Natural killer cell (primary cell): ENCODE measurements at regions of chr1 and their contacts with region 1.

Region 1: DNA sequence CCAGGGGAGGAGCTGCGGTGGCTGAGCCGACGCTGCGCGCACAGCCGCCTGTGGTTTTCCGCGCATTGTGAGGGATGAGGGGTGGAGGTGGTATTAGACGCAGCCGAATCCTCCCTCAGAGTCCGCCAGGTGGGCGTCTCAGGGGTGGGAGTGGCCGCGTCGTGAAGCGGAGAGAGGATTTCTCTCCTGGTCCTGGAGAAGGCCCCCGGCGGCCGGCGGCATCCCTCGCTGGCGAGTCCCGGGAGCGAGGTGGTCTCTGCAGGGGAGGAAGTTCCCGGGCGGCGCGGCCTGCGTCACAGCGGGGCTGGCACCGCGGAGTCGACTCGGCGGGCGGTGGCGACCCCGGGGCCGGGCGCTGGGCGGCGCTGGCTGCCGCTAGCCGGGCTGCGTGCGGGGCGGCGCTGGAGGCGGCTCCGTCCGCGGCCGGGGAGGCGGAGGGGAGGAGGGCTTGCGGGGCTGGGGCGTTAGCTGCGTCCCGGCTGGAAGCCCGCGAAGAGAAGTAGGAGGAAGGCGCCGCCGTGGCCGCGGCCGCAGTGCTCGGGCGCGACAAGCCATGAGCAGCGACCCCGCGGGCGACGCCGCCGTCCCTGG is at the start of gene LRRC8C:
- DNase-seq: peak; percentile 89 to 92
- ATAC-seq: peak; percentile 87 to 93 (median 88)
- H3K4me3 ChIP-seq: peak within 1 kb of the TSS; percentile 91
- H3K4me3 Mint-ChIP-seq: peak within 1 kb of the TSS; percentile 95
- H3K27ac ChIP-seq: peak within 1 kb of the TSS; percentile 88
- H3K27ac Mint-ChIP-seq: peak within 1 kb of the TSS; percentile 92 to 99
- H3K4me1 ChIP-seq: peaks cover 19% of the 10 kb centered on the region
- H3K4me1 Mint-ChIP-seq: peaks cover 45 to 56% of the 10 kb centered on the region in 2 donors
- H3K27me3 ChIP-seq: no peaks in the 10 kb centered on the region
- H3K27me3 Mint-ChIP-seq: no peaks in the 10 kb centered on the region
- CTCF ChIP-seq: peak; percentile 48
- total RNA-seq, gene LRRC8C: 7.6 to 19.1 (median 15.1) TPM

Region 2: GRCh38 chr1:89608319-89608983 is 24.3 kb before region 1 on chr1:
- intact Hi-C with region 1: loop called (anchors 2 kb)
- DNase-seq: peak; percentile 46 to 89
- ATAC-seq: peak; percentile 73 to 77 (median 76)
- H3K4me3 ChIP-seq: no peak overlapping the region
- H3K4me3 Mint-ChIP-seq: peak overlapping the region; percentile 43
- H3K27ac ChIP-seq: peak overlapping the region; percentile 42
- H3K27ac Mint-ChIP-seq: peak overlapping the region; percentile 84 to 92
- H3K4me1 ChIP-seq: peaks cover 49% of the 10 kb centered on the region
- H3K4me1 Mint-ChIP-seq: peaks cover 55 to 69% of the 10 kb centered on the region in 2 donors
- H3K27me3 ChIP-seq: no peaks in the 10 kb centered on the region
- H3K27me3 Mint-ChIP-seq: no peaks in the 10 kb centered on the region
- CTCF ChIP-seq: no peak

Region 3: GRCh38 chr1:89670163-89670562 is 37.4 kb after region 1 on chr1:
- intact Hi-C with region 1: loop called (anchors 2 kb)
- DNase-seq: peak in 1 of 2 donors; percentile 81
- ATAC-seq: peak; percentile 84 to 91 (median 87)
- H3K4me3 ChIP-seq: no peak overlapping the region
- H3K4me3 Mint-ChIP-seq: peak overlapping the region; percentile 67
- H3K27ac ChIP-seq: peak overlapping the region; percentile 40
- H3K27ac Mint-ChIP-seq: peak overlapping the region; percentile 76 to 80
- H3K4me1 ChIP-seq: peaks cover 8% of the 10 kb centered on the region
- H3K4me1 Mint-ChIP-seq: peaks cover 72 to 81% of the 10 kb centered on the region in 2 donors
- H3K27me3 ChIP-seq: no peaks in the 10 kb centered on the region
- H3K27me3 Mint-ChIP-seq: no peaks in the 10 kb centered on the region
- CTCF ChIP-seq: no peak

Region 4: GRCh38 chr1:89719502-89720306 is 87.0 kb after region 1 on chr1:
- intact Hi-C with region 1: loop called (anchors 2 kb)
- DNase-seq: peak in 1 of 2 donors; percentile 60
- ATAC-seq: peak; percentile 45 to 70 (median 67)
- H3K4me3 ChIP-seq: no peak overlapping the region
- H3K4me3 Mint-ChIP-seq: peak overlapping the region; percentile 83
- H3K27ac ChIP-seq: peak overlapping the region; percentile 84
- H3K27ac Mint-ChIP-seq: peak overlapping the region; percentile 88 to 95
- H3K4me1 ChIP-seq: peaks cover 26% of the 10 kb centered on the region
- H3K4me1 Mint-ChIP-seq: peaks cover 52 to 56% of the 10 kb centered on the region in 2 donors
- H3K27me3 ChIP-seq: no peaks in the 10 kb centered on the region
- H3K27me3 Mint-ChIP-seq: no peaks in the 10 kb centered on the region
- CTCF ChIP-seq: no peak